Activated CD4-positive, alpha-beta T cell treated with anti-CD3 and anti-CD28 coated beads for 36 hours (primary cell): ENCODE measurements at regions of chr19 and their contacts with region 1.

Region 1: GRCh38 chr19:51108066-51108804 is at the start of gene CTU1:
- DNase-seq: peak; percentile 99
- ATAC-seq: peak; percentile 98
- H3K4me3 Mint-ChIP-seq: peak within 1 kb of the TSS; percentile 92
- H3K27ac Mint-ChIP-seq: peak within 1 kb of the TSS; percentile 91
- H3K4me1 Mint-ChIP-seq: peaks cover 36% of the 10 kb centered on the region
- H3K27me3 Mint-ChIP-seq: no peaks in the 10 kb centered on the region
- total RNA-seq, gene CTU1: 7.2 to 9.1 TPM

Region 2: GRCh38 chr19:49869441-49870176 is 1238.6 kb before region 1 on chr19:
- CTCF ChIA-PET with region 1: no interaction called
- POLR2A ChIA-PET with region 1: no interaction called
- intact Hi-C with region 1: loop called in 1 of 2 experiments (anchors 2 kb)
- DNase-seq: peak; percentile 94
- ATAC-seq: peak; percentile 87
- H3K4me3 Mint-ChIP-seq: no peak overlapping the region
- H3K27ac Mint-ChIP-seq: no peak overlapping the region
- H3K4me1 Mint-ChIP-seq: peaks cover 39% of the 10 kb centered on the region
- H3K27me3 Mint-ChIP-seq: no peaks in the 10 kb centered on the region

Region 3: GRCh38 chr19:50383852-50384684 is 724.2 kb before region 1 on chr19 and contains the start of gene POLD1:
- CTCF ChIA-PET with region 1: no interaction called
- POLR2A ChIA-PET with region 1: no interaction called
- intact Hi-C with region 1: loop called in 1 of 2 experiments (anchors 1 kb)
- DNase-seq: peak; percentile 100
- ATAC-seq: peak; percentile 92
- H3K4me3 Mint-ChIP-seq: peak within 1 kb of the TSS; percentile 99
- H3K27ac Mint-ChIP-seq: peak within 1 kb of the TSS; percentile 93
- H3K4me1 Mint-ChIP-seq: peaks cover 27% of the 10 kb centered on the region
- H3K27me3 Mint-ChIP-seq: no peaks in the 10 kb centered on the region
- total RNA-seq, gene POLD1: 220 to 227 TPM

Region 4: GRCh38 chr19:50657712-50658440 is 450.4 kb before region 1 on chr19:
- CTCF ChIA-PET with region 1: no interaction called
- POLR2A ChIA-PET with region 1: no interaction called
- intact Hi-C with region 1: loop called in 1 of 2 experiments (anchors 1 kb)
- DNase-seq: peak; percentile 98
- ATAC-seq: peak; percentile 96
- H3K4me3 Mint-ChIP-seq: peak overlapping the region; percentile 76
- H3K27ac Mint-ChIP-seq: peak overlapping the region; percentile 93
- H3K4me1 Mint-ChIP-seq: peaks cover 20% of the 10 kb centered on the region
- H3K27me3 Mint-ChIP-seq: peaks cover 65% of the 10 kb centered on the region

Region 5: DNA sequence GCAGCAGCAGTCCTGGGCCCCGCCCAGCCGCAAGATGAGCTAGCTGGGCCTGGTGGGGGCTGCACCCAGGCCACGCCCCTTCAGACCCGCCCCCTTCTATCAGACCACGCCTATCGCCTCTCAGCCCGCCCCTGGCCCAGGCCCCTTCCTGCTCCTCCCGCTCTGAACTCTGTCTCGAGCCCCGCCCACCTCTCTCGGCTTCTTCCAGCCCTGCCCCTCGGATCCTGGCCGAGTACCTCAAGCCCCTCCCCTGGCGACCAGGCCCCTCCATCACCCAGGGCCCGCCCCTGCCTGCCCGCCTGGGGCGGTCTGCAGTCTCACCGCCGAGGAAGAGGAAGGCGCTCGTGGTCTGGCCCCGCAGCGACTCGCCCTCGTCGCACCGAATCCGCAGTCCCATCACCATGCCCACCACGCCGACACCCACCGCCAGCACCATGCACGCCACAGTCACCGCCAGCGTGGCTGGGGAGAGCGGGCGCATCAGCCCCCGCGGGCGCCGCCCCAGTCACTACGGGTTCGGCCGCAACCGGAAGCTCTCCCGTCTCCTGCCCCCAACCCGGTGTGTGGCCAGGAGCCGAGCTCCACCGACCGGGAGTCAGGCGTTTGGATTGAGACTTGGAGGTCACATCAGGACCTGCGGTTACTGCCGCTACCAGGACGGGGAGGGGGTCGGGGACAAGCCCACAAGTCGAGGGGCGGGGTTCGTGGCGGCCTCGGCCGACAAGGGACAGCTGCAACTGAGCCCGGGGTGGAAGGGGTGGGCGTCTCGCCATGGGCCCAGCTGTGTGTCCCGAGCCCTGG is 259.5 kb after region 1 on chr19:
- CTCF ChIA-PET with region 1: no interaction called
- POLR2A ChIA-PET with region 1: no interaction called
- intact Hi-C with region 1: loop called in 1 of 2 experiments (anchors 1 kb)
- DNase-seq: peak; percentile 99
- ATAC-seq: peak; percentile 83
- H3K4me3 Mint-ChIP-seq: peak overlapping the region; percentile 90
- H3K27ac Mint-ChIP-seq: peak overlapping the region; percentile 97
- H3K4me1 Mint-ChIP-seq: peaks cover 58% of the 10 kb centered on the region
- H3K27me3 Mint-ChIP-seq: no peaks in the 10 kb centered on the region

Region 6: GRCh38 chr19:51570962-51571575 is 462.8 kb after region 1 on chr19 and contains the start of gene ZNF175:
- CTCF ChIA-PET with region 1: no interaction called
- POLR2A ChIA-PET with region 1: no interaction called
- intact Hi-C with region 1: loop called in 1 of 2 experiments (anchors 5 kb)
- DNase-seq: peak; percentile 91
- ATAC-seq: peak; percentile 96
- H3K4me3 Mint-ChIP-seq: peak within 1 kb of the TSS; percentile 91
- H3K27ac Mint-ChIP-seq: peak within 1 kb of the TSS; percentile 89
- H3K4me1 Mint-ChIP-seq: peaks cover 31% of the 10 kb centered on the region
- H3K27me3 Mint-ChIP-seq: peaks cover 2% of the 10 kb centered on the region
- total RNA-seq, gene ZNF175: 5.9 to 9.6 TPM

Region 7: DNA sequence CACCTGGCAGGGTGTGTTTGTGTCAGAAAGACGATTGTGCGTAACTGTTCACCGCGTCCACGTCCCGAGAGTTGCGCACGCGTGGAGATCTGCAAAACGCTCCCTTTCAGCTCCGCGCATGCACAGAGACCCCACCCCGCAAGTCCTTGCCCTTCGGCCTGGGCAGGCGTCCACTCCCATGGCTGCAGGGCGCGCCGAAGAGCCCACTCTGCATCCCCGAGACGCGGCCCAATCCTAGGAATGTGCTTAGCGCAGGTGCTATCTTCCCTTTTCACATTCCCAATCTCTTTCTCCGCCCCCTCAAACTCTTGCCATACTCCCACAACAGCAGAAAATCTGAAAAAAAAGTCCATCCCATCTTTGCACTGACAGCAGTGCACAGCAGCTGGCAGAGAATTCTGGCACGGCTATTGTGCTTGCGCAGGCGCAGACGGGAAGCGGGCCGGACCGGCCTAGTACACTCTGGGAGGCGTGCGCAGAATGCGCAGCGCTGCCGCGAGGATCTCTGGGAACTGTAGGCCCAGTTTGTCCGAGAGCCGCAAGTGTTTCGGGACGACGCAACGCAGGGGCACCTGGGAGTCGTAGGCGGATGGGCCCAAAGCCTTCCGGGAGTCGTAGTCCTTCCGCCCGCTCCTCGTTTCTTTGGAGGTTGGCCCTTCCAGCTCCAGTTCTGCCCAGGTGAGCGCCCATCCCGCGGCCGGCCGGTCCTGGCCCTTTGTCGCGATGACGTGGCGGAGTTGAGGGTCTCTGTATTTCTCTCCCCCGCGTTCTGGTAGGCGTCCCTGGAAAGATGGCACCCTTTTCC is 485.9 kb after region 1 on chr19:
- CTCF ChIA-PET with region 1: no interaction called
- POLR2A ChIA-PET with region 1: no interaction called
- intact Hi-C with region 1: loop called (anchors 1 kb)
- DNase-seq: peak; percentile 99
- ATAC-seq: peak; percentile 100
- H3K4me3 Mint-ChIP-seq: peak overlapping the region; percentile 84
- H3K27ac Mint-ChIP-seq: peak overlapping the region; percentile 81
- H3K4me1 Mint-ChIP-seq: peaks cover 18% of the 10 kb centered on the region
- H3K27me3 Mint-ChIP-seq: peaks cover 5% of the 10 kb centered on the region